Right ventricle myocardium inferior (tissue), 1 donor: ENCODE measurements at regions of chr1 and their contacts with region 1.

Region 1: GRCh38 chr1:158177700-158178450 is 2.8 kb upstream of the CD1D start:
- DNase-seq: peak; percentile 97
- ATAC-seq: peak; percentile 99

Region 2: DNA sequence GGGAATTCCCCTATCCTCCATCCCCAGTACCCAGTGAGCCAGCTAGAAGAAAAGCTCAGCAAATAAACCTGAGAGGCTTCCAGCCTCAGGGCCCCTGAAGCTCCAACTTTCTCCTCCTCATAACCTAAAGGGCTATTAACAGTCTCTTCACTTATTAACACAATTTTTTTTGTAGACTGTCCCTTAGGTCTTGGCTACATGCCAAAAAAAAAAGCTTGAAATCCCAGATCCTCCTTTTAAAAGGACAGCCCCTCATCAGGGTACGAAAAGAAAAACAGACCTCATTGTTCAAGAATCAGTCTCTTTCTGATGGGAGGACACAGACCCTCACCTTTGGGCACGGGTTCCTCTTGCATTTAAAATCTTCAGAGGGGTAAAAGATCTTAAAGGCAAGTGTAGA is 70.0 kb before region 1 on chr1:
- intact Hi-C with region 1: no loop called
- DNase-seq: no peak
- ATAC-seq: no peak

Region 3: DNA sequence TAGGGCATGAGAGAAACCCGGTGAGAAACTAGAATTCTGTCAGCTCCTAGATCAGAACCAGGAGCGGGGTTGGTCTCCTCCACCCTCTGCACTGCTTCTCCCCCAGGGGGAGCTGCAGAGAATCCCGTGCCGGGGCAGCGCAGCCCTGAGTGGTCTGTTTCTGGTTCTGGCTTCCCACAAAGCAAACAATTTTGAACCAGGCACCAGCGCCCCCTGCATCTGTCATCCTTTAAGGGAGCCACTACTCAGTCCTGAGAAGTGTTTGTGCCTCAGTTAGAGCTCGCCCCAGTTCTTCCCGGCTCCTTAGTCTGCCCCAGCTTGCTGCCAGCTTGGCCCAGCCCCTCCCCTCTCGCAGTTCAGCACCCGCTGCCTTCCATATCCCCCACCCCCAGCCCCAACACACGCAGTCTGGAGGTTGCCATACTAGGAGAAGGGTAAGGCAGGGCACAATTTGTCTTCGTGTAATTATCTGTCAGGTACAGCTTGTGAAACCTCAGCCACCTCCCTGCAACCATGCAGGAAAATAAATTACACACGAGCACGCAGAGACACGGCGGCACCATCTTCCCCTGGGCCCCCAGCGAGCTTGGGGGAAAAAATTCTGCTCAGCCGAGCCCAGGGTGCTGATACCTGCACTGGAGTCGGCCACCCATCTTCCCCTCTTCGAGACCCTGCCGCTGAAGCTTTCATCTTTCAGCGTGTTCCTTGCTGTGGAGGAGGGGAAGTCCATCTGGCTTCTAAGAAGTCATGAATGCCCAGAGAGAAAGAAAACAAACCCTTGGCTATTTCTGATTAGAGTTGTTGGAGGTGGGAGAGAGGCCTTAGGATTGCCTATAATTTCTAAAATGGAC is 59.8 kb before region 1 on chr1:
- intact Hi-C with region 1: no loop called
- DNase-seq: no peak
- ATAC-seq: peak; percentile 49

Region 4: DNA sequence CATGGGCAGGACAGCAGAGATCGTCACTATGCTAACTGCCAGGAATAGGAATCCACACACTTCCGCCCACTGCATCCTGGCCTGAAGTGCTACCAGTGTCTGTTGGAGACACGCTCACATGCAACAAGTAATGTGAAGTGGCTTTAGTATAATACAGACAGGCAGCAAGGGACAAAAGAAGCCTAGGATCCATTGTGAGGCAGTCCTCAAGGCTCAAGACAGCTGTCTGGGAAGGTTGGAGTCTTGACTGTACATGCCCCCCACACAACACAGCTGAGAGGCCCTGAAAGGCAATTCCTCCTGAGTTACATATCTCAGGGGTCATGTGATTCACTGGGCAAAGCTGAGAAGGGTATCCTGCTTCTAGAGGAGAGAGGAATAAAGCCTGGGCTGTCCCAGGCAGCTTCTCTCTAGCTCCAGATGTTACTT is 37.1 kb before region 1 on chr1:
- intact Hi-C with region 1: loop called (anchors 5 kb)
- DNase-seq: no peak
- ATAC-seq: no peak

Region 5: GRCh38 chr1:158227904-158228623 is 50.2 kb after region 1 on chr1:
- intact Hi-C with region 1: no loop called
- DNase-seq: no peak
- ATAC-seq: no peak